RWPE1 (cell line): ENCODE measurements at regions of chr2 and their contacts with region 1.

Region 1: GRCh38 chr2:223692191-223692947 is 90.2 kb upstream of the SCG2 start:
- DNase-seq: peak; percentile 69
- H3K27ac ChIP-seq: no peak overlapping the region
- CTCF ChIP-seq: peak; percentile 74

Region 2: DNA sequence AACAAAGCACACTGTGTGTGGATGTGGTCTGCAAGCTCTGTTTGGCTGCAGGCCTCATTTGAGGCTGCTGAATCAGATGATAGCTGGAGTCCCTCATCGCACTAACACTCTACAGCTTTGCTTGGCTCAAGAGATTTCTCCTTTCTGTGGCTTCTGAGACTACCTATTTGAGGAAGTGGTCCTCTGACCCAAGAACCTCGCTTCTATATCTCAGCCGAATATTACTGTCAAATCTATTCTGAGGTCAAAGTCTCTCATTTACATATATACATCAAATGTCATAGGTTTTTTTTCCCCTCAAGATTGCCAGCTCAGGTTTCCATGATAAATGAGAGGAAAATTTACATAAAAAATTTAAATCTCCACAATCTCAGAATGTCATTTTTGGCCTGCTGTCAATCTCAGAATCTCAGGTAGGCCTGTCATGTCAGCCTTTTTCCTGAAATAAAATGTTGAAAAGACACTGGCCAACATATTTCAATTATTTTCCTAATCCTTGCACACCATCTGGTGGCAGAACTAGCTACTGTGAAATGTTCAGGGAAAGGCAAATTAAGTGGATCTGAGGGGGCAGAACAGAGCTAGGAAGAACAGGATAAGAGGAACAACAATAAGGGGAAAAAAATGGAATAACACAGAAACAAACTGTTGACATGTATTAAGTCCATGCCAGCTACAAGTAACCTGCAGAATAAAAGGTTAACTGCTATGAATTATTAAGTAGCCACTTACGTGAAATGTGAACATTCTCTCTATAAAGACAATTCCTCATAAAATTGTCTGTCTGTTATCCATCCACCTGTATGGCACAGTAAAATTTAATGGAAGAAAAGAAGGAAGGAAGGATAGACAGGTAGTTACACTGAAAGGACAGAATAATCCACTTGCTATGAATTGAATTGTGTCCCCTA is 105.7 kb after region 1 on chr2:
- CTCF ChIA-PET with region 1: interaction called, 12 read pairs
- POLR2A ChIA-PET with region 1: no interaction called
- DNase-seq: peak; percentile 40
- H3K27ac ChIP-seq: peak overlapping the region; percentile 84
- CTCF ChIP-seq: peak; percentile 72

Region 3: DNA sequence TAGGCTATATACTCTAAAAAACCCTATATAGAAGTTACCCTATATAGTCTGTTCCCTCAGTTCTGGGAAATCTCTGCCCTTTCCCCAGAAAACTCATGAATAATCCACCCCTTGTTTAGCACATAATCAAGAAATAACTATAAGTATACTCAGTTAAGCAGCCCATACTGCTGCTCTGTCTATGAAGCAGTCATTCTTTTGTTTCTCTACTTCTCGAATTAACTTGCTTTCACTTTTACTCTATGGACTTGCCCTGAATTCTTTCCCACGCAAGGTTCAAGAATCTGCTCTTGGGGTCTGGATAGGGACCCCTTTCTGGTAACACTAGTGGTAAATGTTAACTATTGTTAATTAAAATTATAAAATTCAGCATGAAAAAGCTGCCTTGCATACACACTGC is 162.4 kb after region 1 on chr2:
- CTCF ChIA-PET with region 1: no interaction called
- POLR2A ChIA-PET with region 1: no interaction called
- DNase-seq: no peak
- H3K27ac ChIP-seq: no peak overlapping the region
- CTCF ChIP-seq: no peak